HepG2 (cell line): ENCODE measurements at regions of chr19 and their contacts with region 1.

Region 1: DNA sequence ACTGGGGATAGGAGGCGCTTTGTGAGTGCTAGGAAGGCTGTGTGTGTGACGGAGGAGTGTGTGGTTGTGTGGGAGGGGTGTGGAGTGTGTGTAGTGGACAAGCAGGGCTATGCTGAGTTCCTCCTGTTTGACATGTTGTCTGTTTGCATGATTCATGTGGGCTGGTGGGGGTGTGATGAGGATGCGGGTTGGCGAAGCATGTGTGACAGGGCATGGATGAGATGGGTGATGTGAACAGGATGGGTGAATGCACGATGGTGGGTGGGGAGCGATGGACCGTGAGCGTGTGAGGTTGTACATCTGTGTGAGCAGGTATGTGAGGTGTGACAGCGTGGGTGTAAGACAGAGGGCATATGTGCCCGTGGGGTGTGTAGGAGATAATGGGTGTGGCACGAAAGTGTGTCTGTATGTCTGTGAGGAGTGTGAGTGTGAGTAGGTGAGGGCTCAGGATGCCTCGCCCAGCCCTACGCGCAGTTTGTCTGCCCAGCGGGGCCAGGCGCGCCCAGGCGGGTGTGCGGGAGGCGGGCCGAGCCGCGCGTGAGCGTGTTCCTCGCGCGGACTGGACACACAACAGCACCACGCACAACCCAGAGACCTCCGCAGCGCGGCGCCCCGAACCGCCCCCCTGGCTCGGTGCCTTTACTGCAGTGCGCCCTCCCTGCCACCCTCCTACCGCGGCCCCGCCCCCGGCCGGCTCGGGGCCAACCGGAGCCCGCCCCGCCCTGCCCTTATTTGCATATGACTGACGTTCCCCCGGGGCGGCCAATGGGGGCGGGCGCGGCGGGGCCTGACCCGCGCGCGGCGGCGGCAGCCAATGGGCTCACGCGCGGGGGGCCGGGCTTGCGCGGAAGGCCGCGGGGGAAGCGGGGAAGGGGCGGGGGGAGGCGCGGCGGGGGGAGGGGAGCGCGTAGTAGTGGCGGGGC is 14.4 kb downstream of the CIC start:
- DNase-seq: peak; percentile 83
- ATAC-seq: peak; percentile 52
- H3K4me3 ChIP-seq: peak overlapping the region; percentile 58 to 82 (median 76); a peak in 5 of 6 replicates
- H3K27ac ChIP-seq: peak overlapping the region; percentile 70
- H3K4me1 ChIP-seq: peaks cover 55% of the 10 kb centered on the region
- H3K27me3 ChIP-seq: no peaks in the 10 kb centered on the region; a peak in 1 of 5 replicates
- CTCF ChIP-seq: peak; percentile 39
- EP300 ChIP-seq: no peak
- POLR2A ChIP-seq: peak in 1 of 2 experiments; percentile 88; a peak in 2 of 4 replicates
- RAD21 ChIP-seq: peak; percentile 14; the same call in 1 of the 2 replicates

Region 2: DNA sequence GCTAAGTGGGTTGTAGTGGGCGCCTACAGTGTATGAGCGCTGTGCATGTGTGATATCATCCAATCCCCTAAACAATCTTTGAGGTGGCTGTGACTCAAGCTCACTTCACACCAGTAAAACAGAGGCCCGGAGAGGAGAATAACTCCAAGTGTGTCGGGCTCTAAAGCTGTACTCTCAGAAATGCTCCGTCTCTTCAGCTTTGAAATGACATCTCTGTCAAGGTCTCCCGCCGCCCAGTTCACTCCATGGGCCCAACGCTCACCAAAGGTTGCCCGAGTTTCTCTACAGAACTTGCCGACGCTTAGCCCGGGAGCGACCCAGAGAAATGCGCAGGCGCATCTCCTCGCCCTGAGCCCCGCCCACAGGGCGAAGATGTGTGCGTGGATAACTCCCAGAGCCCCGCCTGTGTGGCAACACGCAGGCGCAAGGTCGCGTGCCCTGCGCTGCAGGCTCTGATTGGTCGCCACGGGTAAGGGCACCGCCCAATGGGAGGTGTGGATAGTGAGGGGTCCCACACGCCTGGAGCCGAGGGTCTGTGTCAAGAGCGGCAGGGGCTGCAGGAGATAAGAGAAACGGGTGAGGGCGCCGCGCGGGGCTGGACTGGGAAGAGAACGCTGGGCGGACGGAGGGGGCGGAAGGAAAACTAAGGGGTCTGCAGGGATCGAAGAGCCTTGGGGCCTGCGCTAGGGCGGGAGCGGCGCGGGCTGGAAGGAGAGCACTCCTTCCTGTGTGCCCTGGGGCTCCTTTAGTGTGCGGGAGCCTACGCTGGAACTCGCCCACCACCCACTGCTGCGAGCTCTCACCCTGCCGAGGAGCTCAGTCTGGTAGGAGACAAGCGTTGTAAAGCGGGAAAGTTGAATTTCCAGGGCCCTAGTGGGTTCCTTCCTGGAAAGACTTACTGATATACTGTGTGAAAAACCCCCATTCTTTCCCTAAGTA is 63.3 kb before region 1 on chr19 and contains the start of gene ZNF526:
- CTCF ChIA-PET with region 1: no interaction called
- POLR2A ChIA-PET with region 1: interaction called, 3 read pairs
- in situ Hi-C with region 1: no loop called
- intact Hi-C with region 1: loop called (anchors 2 kb)
- DNase-seq: peak; percentile 98
- ATAC-seq: peak; percentile 89
- H3K4me3 ChIP-seq: peak within 1 kb of the TSS; percentile 80 to 94 (median 88)
- H3K27ac ChIP-seq: peak within 1 kb of the TSS; percentile 80
- H3K4me1 ChIP-seq: peaks cover 55% of the 10 kb centered on the region
- H3K27me3 ChIP-seq: no peaks in the 10 kb centered on the region; a peak in 1 of 5 replicates
- CTCF ChIP-seq: peak; percentile 62
- EP300 ChIP-seq: no peak; a peak in 1 of 4 replicates
- POLR2A ChIP-seq: peak; percentile 79 to 95
- RAD21 ChIP-seq: peak; percentile 46
- total RNA-seq, gene ZNF526: 8.4 and 8.5 TPM in 2 replicates

Region 3: GRCh38 chr19:42254989-42255765 is 28.2 kb before region 1 on chr19 and contains the start of gene ERF:
- CTCF ChIA-PET with region 1: no interaction called
- POLR2A ChIA-PET with region 1: interaction called, 25 read pairs
- in situ Hi-C with region 1: loop called (anchors 5 kb)
- intact Hi-C with region 1: no loop called
- DNase-seq: peak; percentile 74
- ATAC-seq: peak; percentile 61
- H3K4me3 ChIP-seq: peak within 1 kb of the TSS; percentile 95 to 99 (median 99)
- H3K27ac ChIP-seq: peak within 1 kb of the TSS; percentile 100
- H3K4me1 ChIP-seq: peaks cover 64% of the 10 kb centered on the region
- H3K27me3 ChIP-seq: no peaks in the 10 kb centered on the region; a peak in 1 of 5 replicates
- CTCF ChIP-seq: no peak
- EP300 ChIP-seq: no peak
- POLR2A ChIP-seq: peak; percentile 70 to 92
- RAD21 ChIP-seq: peak; percentile 35; the same call in 1 of the 2 replicates
- total RNA-seq, gene ERF: 43.2 and 67.1 TPM in 2 replicates

Region 4: DNA sequence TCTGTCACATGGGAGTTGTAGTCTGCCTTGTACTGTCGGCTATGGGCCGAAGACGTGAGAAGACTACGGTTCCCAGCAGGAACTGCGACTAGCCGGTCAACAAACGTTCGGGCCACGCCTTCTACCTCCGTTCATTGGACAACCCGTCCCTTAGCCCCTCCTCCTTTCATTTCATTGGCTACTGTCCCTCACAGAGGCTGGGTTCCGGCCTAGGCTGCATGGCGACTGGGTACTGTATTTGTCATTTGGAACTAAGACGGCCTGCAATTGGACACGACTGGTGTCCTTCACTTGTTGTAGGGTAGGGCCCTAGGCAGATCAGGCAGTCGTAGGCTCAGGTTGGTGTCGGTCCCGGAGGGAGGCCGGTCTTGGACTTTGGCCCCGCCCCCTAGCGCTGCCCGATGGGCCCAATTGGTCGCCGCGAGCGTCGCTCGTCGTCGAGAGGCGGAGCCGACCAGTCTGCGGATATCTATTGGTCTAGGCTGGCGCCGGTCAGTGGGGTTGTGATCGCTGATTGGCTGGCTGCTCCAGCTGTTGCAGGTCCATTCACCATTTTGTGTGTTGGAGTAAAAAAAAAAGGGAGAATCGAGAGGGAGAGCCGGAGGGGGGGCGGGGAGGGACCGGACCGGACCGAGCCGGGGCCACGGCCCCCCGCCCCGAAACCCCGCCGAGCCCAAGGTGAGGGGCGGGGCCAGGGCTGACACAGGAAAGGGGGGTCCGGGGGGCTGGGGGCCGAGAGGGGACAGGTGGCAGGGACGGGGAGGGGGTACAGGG is 14.5 kb before region 1 on chr19 and contains the start of gene CIC:
- CTCF ChIA-PET with region 1: interaction called, 3 read pairs
- POLR2A ChIA-PET with region 1: interaction called, 44 read pairs
- in situ Hi-C with region 1: no loop called
- intact Hi-C with region 1: loop called (anchors 1 kb)
- DNase-seq: peak; percentile 100
- ATAC-seq: peak; percentile 94
- H3K4me3 ChIP-seq: peak within 1 kb of the TSS; percentile 75 to 81 (median 81)
- H3K27ac ChIP-seq: peak within 1 kb of the TSS; percentile 96
- H3K4me1 ChIP-seq: peaks cover 29% of the 10 kb centered on the region
- H3K27me3 ChIP-seq: no peaks in the 10 kb centered on the region; a peak in 1 of 5 replicates
- CTCF ChIP-seq: no peak
- EP300 ChIP-seq: no peak
- POLR2A ChIP-seq: 0 out of 4 replicates have a peak, but pooled peaks of 1 of the 2 experiments have one; percentile 1
- RAD21 ChIP-seq: no peak
- total RNA-seq, gene CIC: 5.4 and 8.0 TPM in 2 replicates

Region 5: DNA sequence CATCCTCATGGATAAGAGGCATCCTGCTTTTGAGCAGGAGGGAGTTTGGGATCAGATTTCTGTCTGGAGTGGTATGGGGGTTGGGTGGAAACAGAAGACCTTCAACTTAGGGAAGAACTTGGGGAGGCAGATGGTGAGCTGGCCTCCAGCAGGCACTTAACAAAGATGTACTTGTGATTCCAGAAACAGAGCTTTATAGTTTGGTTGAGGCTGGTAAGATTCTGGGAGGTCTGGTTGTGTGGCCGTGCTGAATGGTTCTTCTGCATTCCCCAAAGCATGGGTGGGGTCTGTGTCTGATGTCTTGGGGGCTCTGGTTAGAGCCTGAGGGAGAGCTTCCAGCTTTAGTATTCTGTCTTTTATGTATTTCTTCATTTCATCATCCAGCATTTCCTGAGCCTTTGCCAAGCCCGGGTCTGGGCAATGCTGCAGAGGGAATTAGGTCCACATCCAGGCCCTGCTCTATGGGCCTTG is 46.9 kb after region 1 on chr19:
- CTCF ChIA-PET with region 1: no interaction called
- POLR2A ChIA-PET with region 1: no interaction called
- in situ Hi-C with region 1: no loop called
- intact Hi-C with region 1: no loop called
- DNase-seq: no peak
- ATAC-seq: no peak
- H3K4me3 ChIP-seq: no peak overlapping the region
- H3K27ac ChIP-seq: no peak overlapping the region
- H3K4me1 ChIP-seq: peaks cover 36% of the 10 kb centered on the region
- H3K27me3 ChIP-seq: no peaks in the 10 kb centered on the region; a peak in 1 of 5 replicates
- CTCF ChIP-seq: no peak
- EP300 ChIP-seq: no peak
- POLR2A ChIP-seq: no peak
- RAD21 ChIP-seq: no peak